T-cell (primary cell): ENCODE measurements at regions of chr10 and their contacts with region 1.

Region 1: DNA sequence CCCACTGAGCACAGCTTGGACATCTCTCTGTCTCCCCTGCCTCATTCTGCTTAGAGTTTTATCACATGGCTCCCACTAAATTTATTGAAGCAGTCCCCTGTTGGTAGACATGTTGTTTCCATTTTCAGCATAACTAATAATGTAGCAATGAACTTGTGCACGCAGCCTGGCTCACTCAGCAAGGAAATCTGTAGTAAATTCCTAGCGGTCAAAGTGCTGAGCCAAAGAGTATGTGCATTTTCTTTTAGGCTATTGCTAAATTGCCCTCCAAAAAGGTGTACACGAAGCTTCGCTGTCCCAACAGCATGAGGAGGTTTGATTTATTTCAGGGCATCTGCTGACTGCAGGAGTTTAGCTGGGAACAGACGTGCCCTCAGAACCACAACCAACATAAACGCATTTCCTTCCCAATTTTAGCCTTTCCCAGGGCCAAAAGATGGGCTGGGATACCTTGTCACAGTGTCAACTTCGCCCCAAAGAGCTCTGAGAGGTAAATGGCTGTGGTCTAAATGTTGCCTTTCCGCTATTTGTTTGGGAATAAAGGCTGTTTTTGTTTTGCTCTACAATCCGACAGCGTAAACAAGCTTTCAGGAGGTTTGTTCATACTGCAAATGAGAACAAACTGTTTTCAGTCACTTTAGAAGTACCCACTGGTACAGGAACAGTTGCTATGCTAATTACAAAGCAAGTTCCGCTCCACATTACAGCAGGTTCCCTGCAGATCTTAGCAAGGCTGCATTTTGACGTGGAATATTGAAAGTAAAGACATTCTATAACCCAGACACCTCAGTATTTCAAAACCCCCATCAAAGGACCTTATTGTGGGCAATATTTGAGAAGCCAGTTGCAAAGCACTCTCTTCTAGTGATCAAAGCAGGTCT is 16.8 kb downstream of the VSIR start:
- DNase-seq: peak in 10 of 35 experiments; percentile 27 to 75 (median 38)
- ATAC-seq: peak; percentile 56 to 89 (median 62)
- H3K4me3 ChIP-seq: peak overlapping the region; percentile 16 to 56
- H3K4me3 Mint-ChIP-seq: peak overlapping the region; percentile 55 to 66 (median 62)
- H3K27ac ChIP-seq: peak overlapping the region; percentile 93
- H3K27ac Mint-ChIP-seq: peak overlapping the region; percentile 98
- H3K4me1 ChIP-seq: peaks cover 77 to 95% of the 10 kb centered on the region in 2 experiments
- H3K4me1 Mint-ChIP-seq: peaks cover 86 to 96% (median 89%) of the 10 kb centered on the region in 3 donors
- H3K27me3 ChIP-seq: no peaks in the 10 kb centered on the region
- H3K27me3 Mint-ChIP-seq: no peaks in the 10 kb centered on the region

Region 2: GRCh38 chr10:71812016-71812912 is 55.7 kb after region 1 on chr10:
- CTCF ChIA-PET with region 1: no interaction called
- POLR2A ChIA-PET with region 1: no interaction called
- DNase-seq: peak; percentile 35 to 88 (median 74)
- ATAC-seq: peak; percentile 88 to 96 (median 94)
- H3K4me3 ChIP-seq: no peak overlapping the region
- H3K4me3 Mint-ChIP-seq: no peak overlapping the region
- H3K27ac ChIP-seq: no peak overlapping the region
- H3K27ac Mint-ChIP-seq: no peak overlapping the region
- H3K4me1 ChIP-seq: peaks cover 0 to 7% of the 10 kb centered on the region in 2 experiments
- H3K4me1 Mint-ChIP-seq: no peaks in the 10 kb centered on the region
- H3K27me3 ChIP-seq: peaks cover 0 to 3% of the 10 kb centered on the region in 2 experiments
- H3K27me3 Mint-ChIP-seq: no peaks in the 10 kb centered on the region

Region 3: DNA sequence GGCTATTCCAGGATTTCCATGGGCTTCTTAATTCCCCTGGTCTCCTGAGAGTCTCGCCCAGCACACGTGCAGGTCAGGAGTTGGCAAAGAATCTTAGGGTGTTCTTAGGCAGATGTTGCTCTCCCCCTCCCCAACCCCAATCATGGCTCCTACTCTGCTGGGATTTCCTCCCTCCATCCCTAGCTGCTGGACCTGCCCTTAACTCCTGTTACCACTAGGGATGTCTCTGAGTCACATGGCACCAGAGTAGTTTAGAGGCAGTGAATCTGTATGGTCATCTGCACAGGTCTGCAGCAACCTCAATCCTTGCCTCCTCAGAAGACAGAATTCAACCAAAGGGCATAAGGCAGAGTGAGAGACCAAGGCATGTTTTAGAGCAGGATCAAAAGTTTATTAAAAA is 155.9 kb after region 1 on chr10:
- CTCF ChIA-PET with region 1: no interaction called
- POLR2A ChIA-PET with region 1: no interaction called
- DNase-seq: no peak
- ATAC-seq: no peak
- H3K4me3 ChIP-seq: no peak overlapping the region
- H3K4me3 Mint-ChIP-seq: no peak overlapping the region
- H3K27ac ChIP-seq: no peak overlapping the region
- H3K27ac Mint-ChIP-seq: no peak overlapping the region
- H3K4me1 ChIP-seq: no peaks in the 10 kb centered on the region
- H3K4me1 Mint-ChIP-seq: peaks cover 3 to 16% (median 10%) of the 10 kb centered on the region in 3 donors
- H3K27me3 ChIP-seq: peaks cover 0 to 5% of the 10 kb centered on the region in 2 experiments
- H3K27me3 Mint-ChIP-seq: peaks cover 0 to 4% of the 10 kb centered on the region in 2 donors

Region 4: DNA sequence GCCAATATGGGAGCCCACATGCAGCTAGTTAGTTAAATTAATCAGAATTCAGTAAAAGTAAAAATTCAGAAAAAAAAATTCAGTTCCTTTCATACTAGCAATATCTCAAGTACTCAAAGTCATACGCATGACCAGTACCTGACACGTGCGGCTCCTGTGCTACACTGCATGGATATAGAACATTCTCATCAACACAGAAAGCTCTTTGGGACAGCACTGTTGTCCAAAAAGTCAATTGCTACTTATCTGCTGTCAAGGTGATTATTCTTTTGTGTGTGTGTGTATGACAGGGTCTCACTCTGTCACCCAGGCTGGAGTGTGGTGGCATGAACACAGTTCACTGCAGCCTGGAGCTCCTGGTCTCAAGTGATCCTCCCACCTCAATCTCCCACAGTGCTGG is 444.3 kb after region 1 on chr10:
- CTCF ChIA-PET with region 1: interaction called in 1 of 2 experiments, 10 read pairs
- POLR2A ChIA-PET with region 1: no interaction called
- DNase-seq: no peak
- ATAC-seq: no peak
- H3K4me3 ChIP-seq: no peak overlapping the region
- H3K4me3 Mint-ChIP-seq: no peak overlapping the region
- H3K27ac ChIP-seq: no peak overlapping the region
- H3K27ac Mint-ChIP-seq: no peak overlapping the region
- H3K4me1 ChIP-seq: no peaks in the 10 kb centered on the region
- H3K4me1 Mint-ChIP-seq: peaks cover 0 to 6% (median 5%) of the 10 kb centered on the region in 3 donors
- H3K27me3 ChIP-seq: no peaks in the 10 kb centered on the region
- H3K27me3 Mint-ChIP-seq: no peaks in the 10 kb centered on the region